Head of caudate nucleus (tissue), 42 donors: ENCODE measurements at regions of chr7 and their contacts with region 1.

Region 1: DNA sequence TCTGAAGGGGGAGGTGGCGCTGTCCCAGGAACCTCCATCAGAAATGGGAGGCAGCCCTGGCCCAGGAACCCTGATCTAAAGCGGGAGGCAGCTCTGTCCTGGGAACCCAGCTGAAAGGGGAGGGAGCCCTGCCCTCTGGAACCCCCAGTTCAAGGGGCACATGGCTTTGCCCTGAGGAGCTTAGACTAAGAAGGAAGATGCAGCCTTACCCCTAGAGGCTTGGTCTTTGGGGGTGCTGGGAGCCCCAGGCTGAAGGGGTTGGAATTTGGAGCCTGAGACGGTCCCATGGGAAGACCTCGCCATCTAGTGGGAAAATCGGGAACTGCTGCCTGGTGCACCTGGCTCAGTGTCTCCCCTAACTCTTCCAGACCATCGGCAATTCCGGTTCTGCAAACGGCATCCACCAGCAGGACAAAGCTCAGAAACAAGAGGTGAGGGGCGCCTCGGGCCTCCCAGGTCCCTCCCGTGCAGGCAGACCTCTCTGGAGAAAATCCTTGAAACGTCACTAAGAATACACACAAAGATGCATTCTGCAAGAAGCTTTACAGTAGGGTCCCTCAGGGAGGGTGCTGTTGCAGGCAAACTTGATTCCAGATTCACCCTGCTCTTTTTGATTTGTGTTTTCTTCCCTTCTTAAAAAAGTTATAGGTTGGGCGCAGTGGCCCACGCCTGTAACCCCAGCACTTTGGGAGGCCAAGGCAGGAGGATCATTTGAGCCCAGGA is 52.4 kb upstream of the GTF2IRD1 start:
- DNase-seq: peak; percentile 37 to 93 (median 81)

Region 2: GRCh38 chr7:74068393-74069085 is 332.8 kb before region 1 on chr7:
- intact Hi-C with region 1: loop called (anchors 5 kb)
- DNase-seq: no peak

Region 3: DNA sequence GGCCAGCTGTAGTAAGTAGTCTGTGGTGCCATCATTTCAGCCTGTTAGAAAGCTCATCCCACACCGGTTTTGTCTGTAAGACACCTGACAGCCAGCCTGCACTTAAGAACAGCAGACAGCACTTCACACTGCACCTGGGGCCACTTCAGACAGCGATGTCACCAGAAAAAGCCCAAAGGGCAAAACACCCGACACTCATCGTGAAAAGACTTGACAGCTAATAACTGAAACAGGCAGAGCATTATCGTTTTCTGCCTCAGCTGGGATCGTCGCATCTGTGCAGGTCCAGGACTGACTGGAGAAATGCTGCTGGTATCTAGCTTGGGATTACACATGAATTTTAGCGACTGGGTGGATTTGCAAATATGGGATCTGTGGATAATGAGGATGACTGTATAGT is 208.2 kb before region 1 on chr7:
- intact Hi-C with region 1: no loop called
- DNase-seq: peak in 3 of 42 donors; percentile 24 to 34 (median 26)

Region 4: DNA sequence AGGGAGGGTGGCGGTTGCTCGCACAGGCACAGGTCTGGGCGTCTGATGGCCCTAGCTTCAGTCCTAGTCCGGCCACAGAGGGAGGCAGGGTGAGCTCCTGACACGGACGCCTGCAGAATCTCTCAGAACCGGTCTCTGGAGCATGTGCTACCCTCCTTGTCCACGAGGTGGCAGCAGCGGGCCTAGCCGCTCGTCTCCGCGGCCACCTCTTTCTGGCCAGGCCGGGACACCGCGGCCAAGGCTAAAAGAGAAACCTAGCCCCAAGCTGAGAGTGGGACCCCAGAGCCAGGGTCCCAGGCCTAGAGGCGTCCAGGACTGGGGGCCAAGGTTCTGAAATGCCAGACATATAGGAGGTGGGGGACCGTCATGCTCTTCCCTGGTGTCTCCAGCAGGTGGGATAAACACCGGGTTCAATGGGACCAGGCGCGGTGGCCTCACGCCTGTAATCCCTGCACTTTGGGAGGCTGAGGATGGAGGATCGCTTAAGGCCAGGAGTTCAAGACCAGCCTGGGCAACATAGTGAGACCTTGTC is 194.6 kb before region 1 on chr7:
- intact Hi-C with region 1: loop called (anchors 5 kb)
- DNase-seq: peak; percentile 40 to 97 (median 90)

Region 5: DNA sequence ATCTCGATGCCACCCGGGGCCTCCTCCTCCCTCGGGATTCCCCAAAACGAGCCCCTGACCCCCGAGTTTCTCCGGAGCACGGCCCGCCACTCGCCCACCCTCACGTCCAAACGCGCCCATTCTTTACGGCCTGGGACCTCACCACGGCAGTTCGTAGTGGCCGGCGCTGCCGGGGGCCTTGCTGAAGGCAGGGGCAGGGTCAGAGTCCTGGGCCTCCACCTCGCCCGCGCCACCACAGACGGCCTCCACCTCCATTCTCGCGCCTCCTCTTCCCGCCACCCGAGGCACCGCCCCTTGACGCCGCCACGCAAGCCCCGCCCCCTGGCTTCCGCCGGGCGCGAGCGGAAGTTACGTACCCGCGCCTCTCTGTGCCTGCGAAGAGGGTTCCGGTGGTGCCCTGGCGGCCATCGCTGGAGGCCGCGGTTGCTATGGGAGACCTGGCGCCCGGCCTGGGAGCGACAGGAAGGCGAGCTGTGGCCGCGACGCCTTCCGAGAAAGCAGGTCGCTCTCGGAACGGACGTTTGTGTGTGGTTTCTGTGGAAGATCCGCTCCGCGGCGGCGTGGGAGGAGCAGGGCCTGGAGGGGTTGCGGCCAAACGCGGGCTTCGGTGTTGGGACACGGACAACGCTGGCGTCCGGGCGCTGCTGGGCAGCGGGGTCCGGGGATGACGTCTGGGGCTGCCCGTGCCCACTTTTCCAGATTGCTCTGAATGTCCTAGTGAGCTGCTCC is 147.0 kb before region 1 on chr7 and contains the start of gene RFC2:
- intact Hi-C with region 1: loop called (anchors 10 kb)
- DNase-seq: peak; percentile 89 to 99 (median 97)